Sigmoid colon (tissue), 7 donors: ENCODE measurements at regions of chr9 and their contacts with region 1.

Region 1: GRCh38 chr9:36407122-36407723 is 7.2 kb upstream of the RNF38 start:
- DNase-seq: peak; percentile 70
- H3K4me3 ChIP-seq: no peak overlapping the region
- H3K27ac ChIP-seq: peak overlapping the region in 1 of 4 donors; percentile 25
- H3K4me1 ChIP-seq: peaks cover 0 to 19% (median 2%) of the 10 kb centered on the region in 4 donors
- H3K27me3 ChIP-seq: no peaks in the 10 kb centered on the region
- CTCF ChIP-seq: peak; percentile 76 to 92 (median 88)
- EP300 ChIP-seq: no peak
- POLR2A ChIP-seq: no peak

Region 2: DNA sequence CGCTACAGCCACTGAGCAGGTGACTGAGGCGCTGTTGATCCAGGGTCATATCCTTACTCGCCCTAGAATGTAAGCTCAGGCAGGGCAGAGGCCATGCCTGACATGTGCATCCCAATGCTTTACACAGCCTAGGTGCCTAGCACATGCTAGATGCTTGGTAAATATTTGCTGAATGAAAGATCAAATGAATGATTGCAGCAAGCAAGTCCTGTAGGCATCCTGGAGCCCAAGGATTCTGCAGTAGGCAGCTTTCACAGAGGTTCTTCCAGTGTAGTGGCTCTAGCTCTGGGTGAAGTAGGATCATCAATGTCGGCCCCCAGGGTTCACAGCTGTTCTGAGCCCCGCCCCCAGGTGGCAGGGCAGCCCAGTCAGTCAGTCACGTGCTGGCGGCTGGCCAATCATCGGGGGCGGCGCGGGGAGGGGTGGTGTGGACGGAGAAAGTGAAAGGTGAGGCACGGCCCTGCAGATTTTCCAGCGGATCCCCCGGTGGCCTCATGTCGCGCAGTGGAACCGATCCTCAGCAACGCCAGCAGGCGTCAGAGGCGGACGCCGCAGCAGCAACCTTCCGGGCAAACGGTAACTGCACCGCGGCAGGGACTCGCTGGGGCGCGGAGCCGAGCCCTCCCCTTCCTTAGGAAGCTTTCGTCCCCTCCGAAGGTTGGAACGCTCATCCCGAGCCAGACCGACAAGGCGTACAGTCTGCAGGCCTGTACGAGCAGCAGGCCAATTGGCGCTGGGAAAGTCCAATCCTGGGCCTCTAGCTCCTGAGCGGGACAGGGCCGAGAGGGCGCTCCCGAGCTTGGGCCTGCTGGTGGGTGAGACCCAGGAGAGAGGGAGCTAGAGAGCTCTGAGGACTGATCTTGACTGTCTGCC is 1760.8 kb before region 1 on chr9 and contains the start of gene GALT:
- intact Hi-C with region 1: no loop called
- DNase-seq: peak; percentile 97
- H3K4me3 ChIP-seq: peak within 1 kb of the TSS; percentile 50 to 81 (median 59)
- H3K27ac ChIP-seq: peak within 1 kb of the TSS; percentile 83 to 94 (median 90)
- H3K4me1 ChIP-seq: peaks cover 0 to 36% (median 35%) of the 10 kb centered on the region in 4 donors
- H3K27me3 ChIP-seq: no peaks in the 10 kb centered on the region
- CTCF ChIP-seq: peak in 3 of 4 experiments; percentile 27 to 39 (median 31)
- EP300 ChIP-seq: no peak
- POLR2A ChIP-seq: peak in 1 of 2 donors; percentile 43
- total RNA-seq, gene GALT: 28.8 to 51.0 (median 33.1) TPM

Region 3: GRCh38 chr9:36445800-36446361 is 38.7 kb after region 1 on chr9:
- intact Hi-C with region 1: loop called (anchors 5 kb)
- DNase-seq: no peak
- H3K4me3 ChIP-seq: no peak overlapping the region
- H3K27ac ChIP-seq: no peak overlapping the region
- H3K4me1 ChIP-seq: peaks cover 0 to 21% (median 8%) of the 10 kb centered on the region in 4 donors
- H3K27me3 ChIP-seq: no peaks in the 10 kb centered on the region
- CTCF ChIP-seq: no peak
- EP300 ChIP-seq: no peak
- POLR2A ChIP-seq: no peak

Region 4: DNA sequence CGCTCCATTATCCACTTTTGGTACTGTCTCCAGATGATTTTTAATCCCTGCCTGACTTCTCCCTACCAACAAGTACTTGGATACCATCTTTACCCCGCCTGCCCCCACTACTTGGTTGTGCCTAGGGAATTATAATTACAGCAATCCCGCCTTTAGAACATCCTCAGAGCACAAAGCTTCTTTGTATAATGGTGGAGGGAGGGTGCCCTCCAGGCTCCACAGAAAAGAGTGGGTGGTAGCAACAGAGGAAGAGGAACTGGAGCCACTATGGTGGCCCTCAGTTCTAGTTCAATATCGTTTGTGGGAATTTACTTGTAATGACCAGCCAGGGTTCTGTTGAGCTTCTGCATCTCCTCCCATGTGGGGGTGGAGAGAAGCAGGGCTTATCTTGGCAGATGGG is 71.9 kb after region 1 on chr9:
- intact Hi-C with region 1: no loop called
- DNase-seq: no peak
- H3K4me3 ChIP-seq: no peak overlapping the region
- H3K27ac ChIP-seq: no peak overlapping the region
- H3K4me1 ChIP-seq: peaks cover 0 to 15% (median under 1%) of the 10 kb centered on the region in 4 donors
- H3K27me3 ChIP-seq: no peaks in the 10 kb centered on the region
- CTCF ChIP-seq: no peak
- EP300 ChIP-seq: no peak
- POLR2A ChIP-seq: no peak

Region 5: DNA sequence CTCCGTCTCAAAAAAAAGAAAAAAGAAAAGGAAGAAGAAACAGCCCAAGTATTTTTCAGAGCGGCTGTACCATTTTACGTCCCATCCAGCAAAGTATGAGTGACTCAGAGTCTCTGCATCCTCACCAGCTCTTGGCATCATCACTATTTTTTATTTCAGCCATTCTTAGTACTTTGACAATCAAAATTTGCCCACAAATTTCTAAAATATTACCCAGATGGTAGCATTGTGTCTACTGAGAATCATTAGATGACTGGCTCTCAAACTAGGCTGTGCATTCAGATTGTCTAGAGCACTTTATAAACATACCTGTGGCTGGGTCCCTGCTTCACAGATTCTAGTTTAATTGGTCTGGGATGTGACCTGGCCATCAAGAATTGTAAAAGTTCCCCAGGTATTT is 143.9 kb after region 1 on chr9:
- intact Hi-C with region 1: loop called (anchors 1 kb)
- DNase-seq: no peak
- H3K4me3 ChIP-seq: no peak overlapping the region
- H3K27ac ChIP-seq: no peak overlapping the region
- H3K4me1 ChIP-seq: no peaks in the 10 kb centered on the region
- H3K27me3 ChIP-seq: no peaks in the 10 kb centered on the region
- CTCF ChIP-seq: no peak
- EP300 ChIP-seq: no peak
- POLR2A ChIP-seq: no peak